CD8-positive, alpha-beta memory T cell (primary cell): ENCODE measurements at regions of chr11 and their contacts with region 1.

Region 1: GRCh38 chr11:59615637-59616395 is at the start of gene OSBP:
- DNase-seq: peak; percentile 94 to 99 (median 99)
- H3K4me3 ChIP-seq: peak within 1 kb of the TSS; percentile 83
- H3K4me3 Mint-ChIP-seq: peak within 1 kb of the TSS; percentile 75 to 98 (median 93)
- H3K27ac ChIP-seq: peak within 1 kb of the TSS; percentile 95
- H3K27ac Mint-ChIP-seq: peak within 1 kb of the TSS; percentile 80 to 99 (median 98)
- H3K4me1 ChIP-seq: peaks cover 40% of the 10 kb centered on the region
- H3K4me1 Mint-ChIP-seq: peaks cover 45 to 49% (median 48%) of the 10 kb centered on the region in 3 donors
- H3K27me3 ChIP-seq: no peaks in the 10 kb centered on the region
- H3K27me3 Mint-ChIP-seq: no peaks in the 10 kb centered on the region
- total RNA-seq, gene OSBP: 37.8 to 38.4 TPM

Region 2: GRCh38 chr11:59510940-59511589 is 104.8 kb before region 1 on chr11 and contains the start of gene OR4D9:
- CTCF ChIA-PET with region 1: no interaction called
- POLR2A ChIA-PET with region 1: no interaction called
- DNase-seq: no peak
- H3K4me3 ChIP-seq: no peak within 1 kb of the TSS
- H3K4me3 Mint-ChIP-seq: no peak within 1 kb of the TSS
- H3K27ac ChIP-seq: no peak within 1 kb of the TSS
- H3K27ac Mint-ChIP-seq: no peak within 1 kb of the TSS
- H3K4me1 ChIP-seq: peaks cover 10% of the 10 kb centered on the region
- H3K4me1 Mint-ChIP-seq: peaks cover 4 to 10% (median 10%) of the 10 kb centered on the region in 3 donors
- H3K27me3 ChIP-seq: no peaks in the 10 kb centered on the region
- H3K27me3 Mint-ChIP-seq: peaks cover 14 to 38% of the 10 kb centered on the region in 2 donors
- total RNA-seq, gene OR4D9: not detected

Region 3: GRCh38 chr11:59542142-59542810 is 73.5 kb before region 1 on chr11:
- CTCF ChIA-PET with region 1: interaction called, 11 read pairs
- POLR2A ChIA-PET with region 1: interaction called, 5 read pairs
- DNase-seq: no peak
- H3K4me3 ChIP-seq: no peak overlapping the region
- H3K4me3 Mint-ChIP-seq: no peak overlapping the region
- H3K27ac ChIP-seq: no peak overlapping the region
- H3K27ac Mint-ChIP-seq: no peak overlapping the region
- H3K4me1 ChIP-seq: no peaks in the 10 kb centered on the region
- H3K4me1 Mint-ChIP-seq: peaks cover 1 to 7% (median 7%) of the 10 kb centered on the region in 3 donors
- H3K27me3 ChIP-seq: no peaks in the 10 kb centered on the region
- H3K27me3 Mint-ChIP-seq: peaks cover 2 to 3% of the 10 kb centered on the region in 2 donors

Region 4: GRCh38 chr11:59560702-59561469 is 54.9 kb before region 1 on chr11:
- CTCF ChIA-PET with region 1: interaction called, 8 read pairs
- POLR2A ChIA-PET with region 1: interaction called, 35 read pairs
- DNase-seq: peak; percentile 72 to 86 (median 74)
- H3K4me3 ChIP-seq: peak overlapping the region; percentile 98
- H3K4me3 Mint-ChIP-seq: peak overlapping the region; percentile 92 to 99 (median 95)
- H3K27ac ChIP-seq: peak overlapping the region; percentile 77
- H3K27ac Mint-ChIP-seq: peak overlapping the region; percentile 92 to 99 (median 96)
- H3K4me1 ChIP-seq: peaks cover 39% of the 10 kb centered on the region
- H3K4me1 Mint-ChIP-seq: peaks cover 42 to 52% (median 51%) of the 10 kb centered on the region in 3 donors
- H3K27me3 ChIP-seq: no peaks in the 10 kb centered on the region
- H3K27me3 Mint-ChIP-seq: peaks cover 0 to 13% of the 10 kb centered on the region in 2 donors

Region 5: GRCh38 chr11:59573234-59573633 is 42.6 kb before region 1 on chr11:
- CTCF ChIA-PET with region 1: no interaction called
- POLR2A ChIA-PET with region 1: interaction called, 12 read pairs
- DNase-seq: no peak
- H3K4me3 ChIP-seq: no peak overlapping the region
- H3K4me3 Mint-ChIP-seq: no peak overlapping the region
- H3K27ac ChIP-seq: no peak overlapping the region
- H3K27ac Mint-ChIP-seq: peak overlapping the region in 2 of 8 donors; percentile 11 to 54
- H3K4me1 ChIP-seq: no peaks in the 10 kb centered on the region
- H3K4me1 Mint-ChIP-seq: no peaks in the 10 kb centered on the region
- H3K27me3 ChIP-seq: no peaks in the 10 kb centered on the region
- H3K27me3 Mint-ChIP-seq: no peaks in the 10 kb centered on the region

Region 6: GRCh38 chr11:59668950-59669610 is 53.3 kb after region 1 on chr11 and contains the start of gene PATL1:
- CTCF ChIA-PET with region 1: interaction called, 14 read pairs
- POLR2A ChIA-PET with region 1: interaction called, 59 read pairs
- DNase-seq: peak; percentile 99 to 100 (median 99)
- H3K4me3 ChIP-seq: peak within 1 kb of the TSS; percentile 73
- H3K4me3 Mint-ChIP-seq: peak within 1 kb of the TSS; percentile 96 to 99 (median 98)
- H3K27ac ChIP-seq: peak within 1 kb of the TSS; percentile 97
- H3K27ac Mint-ChIP-seq: peak within 1 kb of the TSS; percentile 99 to 100 (median 100)
- H3K4me1 ChIP-seq: peaks cover 23% of the 10 kb centered on the region
- H3K4me1 Mint-ChIP-seq: peaks cover 33 to 52% (median 47%) of the 10 kb centered on the region in 3 donors
- H3K27me3 ChIP-seq: no peaks in the 10 kb centered on the region
- H3K27me3 Mint-ChIP-seq: no peaks in the 10 kb centered on the region
- total RNA-seq, gene PATL1: 61.3 to 65.8 TPM